Activated naive CD4-positive, alpha-beta T cell treated with anti-CD3 and anti-CD28 coated beads for 36 hours (primary cell): ENCODE measurements at regions of chr1 and their contacts with region 1.

Region 1: GRCh38 chr1:6602669-6603237 is at the start of gene KLHL21:
- DNase-seq: peak; percentile 81
- H3K4me3 Mint-ChIP-seq: peak within 1 kb of the TSS; percentile 97
- H3K27ac Mint-ChIP-seq: peak within 1 kb of the TSS; percentile 96
- H3K4me1 Mint-ChIP-seq: peaks cover 35% of the 10 kb centered on the region
- H3K27me3 Mint-ChIP-seq: no peaks in the 10 kb centered on the region
- total RNA-seq, gene KLHL21: 21.0 to 23.3 TPM

Region 2: DNA sequence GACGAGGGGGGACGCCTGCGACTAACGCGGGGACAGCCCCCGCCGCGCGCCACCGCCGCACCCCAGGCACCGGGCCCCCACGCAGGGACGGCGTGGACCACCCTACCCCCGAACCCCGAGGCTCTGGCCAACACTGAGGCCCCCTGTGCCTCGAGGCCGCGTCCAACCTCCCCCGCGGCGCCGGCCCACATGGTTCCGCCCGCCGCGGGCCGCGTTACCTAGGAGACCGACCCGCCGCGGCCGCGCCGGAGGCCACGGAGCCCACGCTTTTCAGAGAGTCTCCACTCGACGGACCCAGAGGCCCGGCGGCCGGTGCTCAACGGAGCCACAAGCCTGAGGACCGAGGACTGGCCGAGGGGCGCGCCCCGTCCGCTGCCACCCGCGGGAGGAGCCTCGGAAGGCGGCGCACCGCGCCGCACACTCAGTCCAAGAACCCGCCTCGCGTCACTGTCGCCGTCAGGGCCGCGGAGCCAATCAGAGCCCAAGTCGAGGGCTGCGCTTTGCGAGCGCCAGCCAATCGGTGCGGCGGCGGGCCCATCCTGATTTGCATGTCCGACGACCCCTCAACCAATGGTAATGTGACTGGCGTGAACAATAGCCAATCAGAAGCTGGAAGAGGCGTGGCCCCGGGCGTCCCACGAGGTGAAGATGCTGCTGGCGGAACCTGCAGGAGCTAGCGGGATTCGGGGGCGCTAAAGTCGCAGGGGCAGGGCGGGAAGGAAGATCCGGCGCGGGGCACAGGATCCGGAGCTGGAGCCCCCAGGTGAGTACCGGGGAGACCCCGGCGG is 610.5 kb before region 1 on chr1 and contains the start of gene NPHP4:
- CTCF ChIA-PET with region 1: no interaction called
- intact Hi-C with region 1: loop called (anchors 1 kb)
- DNase-seq: peak; percentile 100
- H3K4me3 Mint-ChIP-seq: peak within 1 kb of the TSS; percentile 81
- H3K27ac Mint-ChIP-seq: peak within 1 kb of the TSS; percentile 79
- H3K4me1 Mint-ChIP-seq: peaks cover 22% of the 10 kb centered on the region
- H3K27me3 Mint-ChIP-seq: no peaks in the 10 kb centered on the region
- total RNA-seq, gene NPHP4: 10.7 to 11.2 TPM

Region 3: GRCh38 chr1:6393400-6394187 is 209.2 kb before region 1 on chr1 and contains the start of gene ACOT7:
- CTCF ChIA-PET with region 1: no interaction called
- intact Hi-C with region 1: loop called (anchors 2 kb)
- DNase-seq: peak; percentile 94
- H3K4me3 Mint-ChIP-seq: peak within 1 kb of the TSS; percentile 81
- H3K27ac Mint-ChIP-seq: peak within 1 kb of the TSS; percentile 84
- H3K4me1 Mint-ChIP-seq: peaks cover 21% of the 10 kb centered on the region
- H3K27me3 Mint-ChIP-seq: no peaks in the 10 kb centered on the region
- total RNA-seq, gene ACOT7: 74.2 to 77.6 TPM

Region 4: DNA sequence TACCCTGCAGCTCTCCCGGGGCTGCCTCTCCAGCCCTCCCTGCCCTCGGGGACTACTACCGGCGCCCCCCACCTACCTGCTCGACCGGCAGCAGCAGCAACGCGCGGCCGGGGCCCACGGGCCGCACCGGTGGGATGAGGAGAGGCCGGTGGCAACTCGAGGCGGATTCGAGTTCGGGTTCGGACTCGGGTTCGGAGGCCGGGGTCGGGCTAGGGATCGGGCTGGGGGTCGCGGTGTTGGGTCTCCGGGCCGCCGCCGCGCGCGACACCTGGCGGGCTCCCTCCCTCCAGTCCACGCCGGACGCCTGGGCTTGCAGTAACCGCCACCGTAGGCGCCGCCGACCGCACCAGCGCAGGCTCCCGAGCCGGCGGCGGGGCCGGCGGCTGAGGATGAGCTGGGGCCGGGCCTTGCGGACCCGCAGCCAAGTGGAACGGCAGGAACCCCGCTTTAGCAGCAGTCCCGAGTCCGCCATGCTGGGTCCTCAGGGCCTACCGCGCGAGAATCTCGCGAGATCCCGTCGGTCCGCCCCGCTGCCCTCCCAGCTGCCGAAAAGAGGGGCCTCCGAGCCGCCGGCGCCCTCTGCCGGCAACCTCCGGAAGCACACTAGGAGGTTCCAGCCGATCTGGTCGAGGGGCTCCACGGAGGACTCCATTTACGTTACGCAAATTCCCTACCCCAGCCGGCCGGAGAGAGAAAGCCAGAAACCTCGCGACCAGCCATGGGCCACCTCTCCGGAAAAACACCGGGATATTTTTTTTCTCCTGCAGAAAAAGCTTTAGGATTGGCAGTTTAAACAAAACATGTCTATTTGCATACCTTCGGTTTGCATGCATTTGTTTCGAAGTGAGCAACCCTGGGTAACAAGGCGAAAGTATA is 48.5 kb before region 1 on chr1 and contains the start of gene NOL9:
- CTCF ChIA-PET with region 1: interaction called, 7 read pairs
- intact Hi-C with region 1: loop called (anchors 1 kb)
- DNase-seq: peak; percentile 96
- H3K4me3 Mint-ChIP-seq: peak within 1 kb of the TSS; percentile 80
- H3K27ac Mint-ChIP-seq: peak within 1 kb of the TSS; percentile 24
- H3K4me1 Mint-ChIP-seq: peaks cover 19% of the 10 kb centered on the region
- H3K27me3 Mint-ChIP-seq: no peaks in the 10 kb centered on the region
- total RNA-seq, gene NOL9: 24.6 to 29.6 TPM

Region 5: DNA sequence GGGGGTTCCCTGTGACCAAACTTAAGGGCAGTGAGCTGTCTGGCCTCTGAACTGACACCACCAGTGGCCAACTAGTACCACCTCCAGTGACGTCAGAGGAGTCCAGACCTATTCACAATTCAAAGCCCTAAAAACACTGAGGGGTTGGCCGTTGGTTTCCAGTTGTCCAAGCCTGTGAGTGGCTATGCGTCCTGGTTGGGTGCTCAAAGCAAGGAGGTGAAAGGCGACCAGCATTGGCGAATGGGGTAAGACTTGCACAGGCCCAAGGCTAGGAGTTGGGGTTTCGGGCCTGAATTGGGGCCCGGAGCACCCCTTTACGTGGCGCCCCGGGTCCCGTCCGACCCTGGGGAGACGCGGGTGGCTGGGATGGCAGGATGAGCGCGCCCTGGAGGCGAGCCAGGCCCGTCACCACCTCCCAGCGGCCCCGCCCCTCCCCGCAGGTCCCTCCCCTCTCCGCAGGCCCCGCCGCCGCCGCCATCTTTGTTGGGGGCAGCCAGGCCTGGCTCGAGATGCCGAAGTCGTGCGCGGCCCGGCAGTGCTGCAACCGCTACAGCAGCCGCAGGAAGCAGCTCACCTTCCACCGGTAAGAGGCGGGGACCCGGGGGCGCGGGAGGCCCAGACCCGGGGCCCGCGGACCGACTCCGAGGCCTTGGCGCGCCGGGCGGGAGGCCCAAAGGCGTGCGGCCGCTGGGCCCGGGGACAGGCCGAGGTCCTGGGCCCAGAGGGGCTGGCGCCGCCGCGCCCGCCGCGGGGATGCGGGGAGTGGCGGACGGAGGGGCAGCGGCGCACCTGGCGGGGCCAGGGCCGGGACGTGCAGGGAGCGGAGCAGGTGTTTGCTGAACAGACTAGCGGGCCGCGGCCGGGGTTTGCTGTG is 22.2 kb after region 1 on chr1 and contains the start of gene THAP3:
- CTCF ChIA-PET with region 1: interaction called, 3 read pairs
- intact Hi-C with region 1: loop called (anchors 1 kb)
- DNase-seq: peak; percentile 91
- H3K4me3 Mint-ChIP-seq: peak within 1 kb of the TSS; percentile 87
- H3K27ac Mint-ChIP-seq: peak within 1 kb of the TSS; percentile 66
- H3K4me1 Mint-ChIP-seq: peaks cover 29% of the 10 kb centered on the region
- H3K27me3 Mint-ChIP-seq: no peaks in the 10 kb centered on the region
- total RNA-seq, gene THAP3: 27.3 to 30.9 TPM

Region 6: GRCh38 chr1:6962996-6963911 is 360.5 kb after region 1 on chr1:
- CTCF ChIA-PET with region 1: no interaction called
- intact Hi-C with region 1: loop called (anchors 5 kb)
- DNase-seq: peak; percentile 91
- H3K4me3 Mint-ChIP-seq: peak overlapping the region; percentile 74
- H3K27ac Mint-ChIP-seq: peak overlapping the region; percentile 80
- H3K4me1 Mint-ChIP-seq: peaks cover 22% of the 10 kb centered on the region
- H3K27me3 Mint-ChIP-seq: peaks cover 16% of the 10 kb centered on the region